Activated CD4-positive, alpha-beta memory T cell treated with anti-CD3 and anti-CD28 coated beads, Interleukin-2, amount 10 ng/mL, durations not matched to agents 7 days and 5 days (primary cell): ENCODE measurements at regions of chr16 and their contacts with region 1.

Region 1: DNA sequence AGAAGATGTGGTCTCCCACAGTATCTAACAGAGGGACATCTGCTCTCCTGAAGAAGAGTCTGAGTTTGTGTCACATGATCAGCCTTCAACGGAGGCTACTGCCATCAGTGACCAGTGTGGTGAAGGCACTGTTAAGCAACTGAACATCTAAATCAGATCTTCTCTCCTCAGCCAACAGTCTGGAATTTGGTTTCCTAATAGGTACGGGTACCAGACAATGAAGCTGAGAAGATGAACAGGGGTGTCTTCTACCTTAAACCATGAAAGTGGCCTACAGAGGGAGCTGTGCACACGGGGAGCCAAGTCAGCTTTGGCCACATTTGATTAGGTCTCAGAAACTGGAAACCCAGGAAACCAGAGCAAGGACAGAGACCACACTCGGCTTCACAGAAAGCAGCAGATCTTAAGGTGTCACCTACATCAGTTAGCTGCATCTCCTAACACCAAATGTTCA is 41.8 kb downstream of the BRD7 start:
- DNase-seq: peak; percentile 82
- H3K4me3 Mint-ChIP-seq: no peak overlapping the region
- H3K27ac Mint-ChIP-seq: peak overlapping the region; percentile 85
- H3K4me1 Mint-ChIP-seq: peaks cover 72% of the 10 kb centered on the region
- H3K27me3 Mint-ChIP-seq: no peaks in the 10 kb centered on the region

Region 2: DNA sequence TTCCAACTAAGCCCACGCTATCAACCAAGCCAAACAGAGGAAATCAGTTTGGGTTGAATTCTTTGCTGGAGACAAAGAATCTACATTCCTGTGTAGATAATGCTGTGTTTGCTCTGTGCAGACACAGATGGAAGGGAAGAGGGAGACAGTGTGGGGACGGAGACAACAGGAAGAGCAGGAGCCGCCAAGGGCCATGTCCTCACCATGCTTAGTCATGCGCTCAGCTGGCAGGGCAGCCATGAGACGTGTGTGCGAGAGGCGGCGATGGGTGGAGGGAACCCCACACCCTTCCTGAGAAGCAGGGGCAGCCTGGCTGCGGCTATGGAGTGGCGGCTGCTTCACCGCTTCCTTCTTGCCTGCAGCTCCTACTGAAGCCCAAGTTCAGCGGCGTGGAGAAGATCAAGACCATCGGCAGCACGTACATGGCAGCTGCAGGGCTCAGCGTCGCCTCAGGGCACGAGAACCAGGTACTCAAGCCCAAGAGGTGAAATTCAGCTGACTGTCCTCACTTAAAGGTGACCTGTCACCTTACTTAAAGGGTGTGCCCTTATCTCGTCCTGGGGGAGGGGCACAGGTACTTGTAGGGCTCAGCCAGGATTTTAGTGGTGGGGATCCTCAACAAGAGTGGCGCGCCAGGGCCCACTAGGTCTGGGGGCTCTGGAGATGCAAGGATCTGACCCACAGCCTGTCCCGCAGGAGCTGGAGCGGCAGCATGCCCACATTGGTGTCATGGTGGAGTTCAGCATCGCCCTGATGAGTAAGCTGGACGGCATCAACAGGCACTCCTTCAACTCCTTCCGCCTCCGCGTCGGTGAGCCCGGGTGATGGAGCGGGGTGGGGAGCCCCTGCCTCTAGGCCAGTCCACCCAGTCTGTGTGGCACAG is 13.1 kb before region 1 on chr16:
- CTCF ChIA-PET with region 1: interaction called, 17 read pairs
- POLR2A ChIA-PET with region 1: interaction called, 14 read pairs
- DNase-seq: peak; percentile 79
- H3K4me3 Mint-ChIP-seq: peak overlapping the region; percentile 22
- H3K27ac Mint-ChIP-seq: peak overlapping the region; percentile 77
- H3K4me1 Mint-ChIP-seq: peaks cover 54% of the 10 kb centered on the region
- H3K27me3 Mint-ChIP-seq: no peaks in the 10 kb centered on the region

Region 3: DNA sequence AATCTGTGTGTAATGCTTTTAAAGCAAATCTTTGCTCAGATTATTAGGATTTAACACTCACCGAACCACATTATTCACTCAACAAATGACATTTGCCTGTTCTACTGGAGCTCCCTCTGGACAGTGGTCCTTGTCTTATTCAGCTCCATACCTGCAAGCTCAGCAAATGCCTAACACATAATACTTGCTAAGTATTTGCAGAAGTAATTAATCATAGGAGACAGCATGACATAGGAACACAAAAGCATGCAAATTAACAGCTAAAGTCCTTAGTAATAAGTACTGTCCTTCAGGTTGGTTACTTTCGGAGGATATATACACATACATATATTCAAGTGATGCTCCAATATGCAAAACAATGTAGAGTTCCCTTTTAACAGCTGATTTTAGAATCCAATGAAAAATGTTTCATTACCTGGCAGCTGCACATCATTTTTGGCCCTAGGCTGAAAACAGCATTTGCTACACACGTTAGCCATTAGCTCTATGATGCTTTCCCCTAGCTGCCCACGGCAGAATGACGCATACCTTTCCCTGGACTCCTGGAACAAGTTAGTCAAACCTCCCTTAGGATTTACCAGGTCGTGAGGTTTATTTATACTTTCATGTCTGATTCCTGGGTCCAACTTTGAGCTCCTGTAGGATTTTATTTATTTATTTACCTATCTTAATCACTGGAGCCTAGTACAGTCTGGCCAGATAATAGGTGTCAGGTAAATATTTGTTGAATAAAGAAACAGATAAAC is 33.2 kb after region 1 on chr16:
- CTCF ChIA-PET with region 1: interaction called, 364 read pairs
- POLR2A ChIA-PET with region 1: interaction called, 86 read pairs
- DNase-seq: no peak
- H3K4me3 Mint-ChIP-seq: no peak overlapping the region
- H3K27ac Mint-ChIP-seq: no peak overlapping the region
- H3K4me1 Mint-ChIP-seq: peaks cover 41% of the 10 kb centered on the region
- H3K27me3 Mint-ChIP-seq: no peaks in the 10 kb centered on the region

Region 4: GRCh38 chr16:50403491-50403890 is 76.5 kb after region 1 on chr16:
- CTCF ChIA-PET with region 1: no interaction called
- POLR2A ChIA-PET with region 1: no interaction called
- DNase-seq: no peak
- H3K4me3 Mint-ChIP-seq: no peak overlapping the region
- H3K27ac Mint-ChIP-seq: no peak overlapping the region
- H3K4me1 Mint-ChIP-seq: no peaks in the 10 kb centered on the region
- H3K27me3 Mint-ChIP-seq: no peaks in the 10 kb centered on the region

Region 5: GRCh38 chr16:50509521-50510341 is 182.8 kb after region 1 on chr16:
- CTCF ChIA-PET with region 1: interaction called, 12 read pairs
- POLR2A ChIA-PET with region 1: no interaction called
- DNase-seq: peak; percentile 56
- H3K4me3 Mint-ChIP-seq: no peak overlapping the region
- H3K27ac Mint-ChIP-seq: no peak overlapping the region
- H3K4me1 Mint-ChIP-seq: no peaks in the 10 kb centered on the region
- H3K27me3 Mint-ChIP-seq: no peaks in the 10 kb centered on the region

Region 6: DNA sequence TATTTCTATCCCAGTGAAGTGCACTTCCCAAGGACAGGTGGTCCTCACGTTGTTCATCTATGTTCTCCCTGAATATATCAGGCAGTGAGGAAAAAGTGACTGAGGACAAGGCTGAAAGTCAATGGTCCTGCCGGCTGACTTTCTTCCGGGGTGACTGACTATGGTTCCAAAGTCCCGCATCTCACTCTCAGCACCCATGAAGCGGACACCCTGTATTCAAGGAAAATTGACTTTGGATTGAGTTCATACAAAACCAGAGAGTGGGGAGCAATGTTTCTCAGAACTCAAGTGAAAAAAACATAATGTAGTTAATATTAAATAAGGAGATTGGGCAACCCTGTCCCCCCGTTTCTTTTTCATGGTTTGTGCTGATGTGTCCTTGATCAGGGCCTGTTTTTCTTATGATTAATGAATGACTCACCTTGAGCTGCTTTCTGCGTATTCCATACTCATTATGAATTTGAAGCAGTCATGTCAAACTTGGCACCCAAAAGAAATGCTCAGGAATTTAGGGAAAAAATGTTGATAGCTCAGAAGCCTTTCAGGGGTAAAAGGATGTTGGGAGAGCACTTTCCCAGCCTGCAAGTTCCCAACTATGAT is 598.9 kb after region 1 on chr16:
- CTCF ChIA-PET with region 1: no interaction called
- POLR2A ChIA-PET with region 1: no interaction called
- DNase-seq: no peak
- H3K4me3 Mint-ChIP-seq: no peak overlapping the region
- H3K27ac Mint-ChIP-seq: no peak overlapping the region
- H3K4me1 Mint-ChIP-seq: no peaks in the 10 kb centered on the region
- H3K27me3 Mint-ChIP-seq: no peaks in the 10 kb centered on the region